Panc1 (cell line): ENCODE measurements at regions of chr6 and their contacts with region 1.

Region 1: DNA sequence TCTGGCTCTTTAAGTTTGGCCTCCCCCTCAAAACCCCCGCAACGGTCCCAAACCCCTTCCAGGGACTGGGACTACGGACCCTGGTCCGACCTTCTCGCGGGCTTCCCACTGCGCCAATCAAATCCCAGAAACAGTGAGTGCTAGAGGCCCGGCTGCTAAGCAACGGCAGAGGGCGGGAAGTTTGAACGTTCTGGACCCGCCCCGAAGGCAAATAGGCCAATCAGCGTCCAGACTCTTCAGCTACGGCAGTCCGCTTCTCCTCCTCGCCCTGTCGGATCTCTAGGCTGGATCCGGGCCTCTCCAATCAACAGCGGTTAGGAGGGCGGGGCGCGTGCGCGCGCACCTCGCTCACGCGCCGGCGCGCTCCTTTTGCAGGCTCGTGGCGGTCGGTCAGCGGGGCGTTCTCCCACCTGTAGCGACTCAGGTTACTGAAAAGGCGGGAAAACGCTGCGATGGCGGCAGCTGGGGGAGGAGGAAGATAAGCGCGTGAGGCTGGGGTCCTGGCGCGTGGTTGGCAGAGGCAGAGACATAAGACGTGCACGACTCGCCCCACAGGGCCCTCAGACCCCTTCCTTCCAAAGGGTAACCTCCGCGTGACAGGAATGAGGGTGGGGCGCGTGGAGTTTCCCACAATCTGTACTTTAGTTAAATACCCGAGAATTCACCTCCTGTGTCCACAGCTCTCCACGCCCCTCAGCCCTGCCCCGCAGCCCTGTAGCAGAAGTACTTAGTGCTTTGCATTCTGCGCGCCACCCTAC is at the start of gene MSH5:
- DNase-seq: peak; percentile 96
- ATAC-seq: peak; percentile 87
- H3K4me3 ChIP-seq: peak within 1 kb of the TSS; percentile 79 to 90
- H3K27ac ChIP-seq: peak within 1 kb of the TSS; percentile 100
- H3K4me1 ChIP-seq: peaks cover 32% of the 10 kb centered on the region
- H3K27me3 ChIP-seq: no peaks in the 10 kb centered on the region
- CTCF ChIP-seq: no peak
- total RNA-seq, gene MSH5: 38.1 TPM

Region 2: DNA sequence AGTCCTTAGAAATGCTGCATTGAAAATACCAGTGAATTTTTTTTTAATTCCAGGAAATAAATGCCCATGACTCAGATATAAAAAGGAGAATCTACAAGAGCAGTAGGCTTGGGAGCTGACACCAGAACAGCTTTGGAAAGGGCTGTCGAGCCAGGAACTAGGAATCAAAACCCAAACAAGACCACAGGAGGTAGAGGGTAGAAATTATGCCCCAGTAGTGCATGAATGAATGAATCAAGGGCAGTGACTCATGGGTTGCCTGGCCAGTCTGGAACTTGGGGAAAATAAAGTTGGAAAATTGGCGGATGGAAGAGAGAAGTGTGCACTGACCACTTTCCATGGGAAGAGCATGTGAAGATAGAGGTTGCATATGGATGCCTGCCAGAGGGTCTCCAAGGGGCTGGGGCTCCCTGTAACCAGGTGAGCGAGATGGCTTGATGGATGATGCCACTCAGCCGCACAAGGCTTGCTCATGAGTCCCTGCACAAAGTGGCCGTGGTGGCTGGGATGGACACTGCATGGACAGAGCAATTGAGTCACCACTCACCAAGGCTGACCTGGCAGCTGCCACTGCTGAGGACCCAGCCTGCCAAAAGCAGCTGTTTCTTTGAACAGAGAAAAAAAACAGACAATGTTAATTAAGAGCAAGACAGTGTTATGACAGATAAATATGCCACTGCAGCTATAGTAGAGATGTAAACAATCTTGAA is 226.2 kb before region 1 on chr6:
- CTCF ChIA-PET with region 1: no interaction called
- POLR2A ChIA-PET with region 1: no interaction called
- in situ Hi-C with region 1: no loop called
- intact Hi-C with region 1: no loop called
- DNase-seq: no peak
- ATAC-seq: no peak
- H3K4me3 ChIP-seq: no peak overlapping the region
- H3K27ac ChIP-seq: no peak overlapping the region
- H3K4me1 ChIP-seq: peaks cover 6% of the 10 kb centered on the region
- H3K27me3 ChIP-seq: no peaks in the 10 kb centered on the region
- CTCF ChIP-seq: no peak

Region 3: GRCh38 chr6:31665501-31666336 is 74.1 kb before region 1 on chr6 and contains the start of gene CSNK2B:
- CTCF ChIA-PET with region 1: no interaction called
- POLR2A ChIA-PET with region 1: interaction called, 11 read pairs
- in situ Hi-C with region 1: no loop called
- intact Hi-C with region 1: no loop called
- DNase-seq: peak; percentile 88
- ATAC-seq: peak; percentile 91
- H3K4me3 ChIP-seq: peak within 1 kb of the TSS; percentile 76 to 94
- H3K27ac ChIP-seq: peak within 1 kb of the TSS; percentile 96
- H3K4me1 ChIP-seq: peaks cover 14% of the 10 kb centered on the region
- H3K27me3 ChIP-seq: no peaks in the 10 kb centered on the region
- CTCF ChIP-seq: no peak
- total RNA-seq, gene CSNK2B: 219 TPM

Region 4: DNA sequence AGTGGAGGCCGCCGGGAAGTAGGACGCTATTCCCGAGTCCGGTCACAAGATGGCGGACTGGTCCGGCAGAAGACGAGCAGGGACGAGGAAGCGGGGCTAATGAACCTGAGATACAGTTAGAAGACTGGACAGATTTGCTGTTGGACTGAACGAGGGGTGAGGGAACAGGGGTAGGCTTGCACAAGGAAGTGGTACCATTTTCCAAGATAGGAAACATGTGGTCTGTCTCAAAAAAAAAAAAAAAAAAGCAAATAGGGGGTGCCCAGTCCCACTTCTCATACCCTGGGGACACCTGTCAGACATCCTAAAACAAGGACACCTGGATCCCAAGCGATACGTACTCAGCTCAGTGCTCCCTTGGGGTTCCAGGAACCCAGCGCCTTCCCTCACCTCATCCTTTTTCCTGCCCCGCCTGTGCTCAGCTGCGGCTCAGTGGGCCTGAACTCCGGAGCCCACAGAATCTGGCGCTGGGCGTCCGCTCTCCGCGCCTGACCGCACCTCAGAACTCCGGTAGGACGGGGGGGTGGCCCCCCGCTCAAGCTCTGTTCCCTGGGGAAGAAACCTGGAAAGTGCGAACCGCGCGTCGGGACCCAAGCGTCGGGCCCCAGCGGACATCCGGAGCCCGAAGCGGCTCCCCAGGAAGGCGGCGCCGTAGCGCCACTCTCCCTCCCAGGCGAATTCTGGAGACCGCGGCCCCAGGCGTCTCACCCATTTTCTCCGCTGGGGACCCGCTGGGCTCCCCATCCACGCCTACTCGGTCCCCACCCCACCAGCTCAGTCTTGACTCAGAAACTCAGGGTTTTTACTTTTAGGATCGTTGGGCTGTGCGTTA is 58.8 kb before region 1 on chr6 and contains the start of gene LY6G5C:
- CTCF ChIA-PET with region 1: no interaction called
- POLR2A ChIA-PET with region 1: interaction called, 11 read pairs
- in situ Hi-C with region 1: no loop called
- intact Hi-C with region 1: no loop called
- DNase-seq: peak; percentile 30
- ATAC-seq: peak; percentile 92
- H3K4me3 ChIP-seq: no peak within 1 kb of the TSS; a peak in 1 of 4 replicates
- H3K27ac ChIP-seq: no peak within 1 kb of the TSS; the same call in 1 of the 2 replicates
- H3K4me1 ChIP-seq: peaks cover 4% of the 10 kb centered on the region; the same call in 1 of the 2 replicates
- H3K27me3 ChIP-seq: no peaks in the 10 kb centered on the region
- CTCF ChIP-seq: peak; percentile 86
- total RNA-seq, gene LY6G5C: 0.62 TPM

Region 5: DNA sequence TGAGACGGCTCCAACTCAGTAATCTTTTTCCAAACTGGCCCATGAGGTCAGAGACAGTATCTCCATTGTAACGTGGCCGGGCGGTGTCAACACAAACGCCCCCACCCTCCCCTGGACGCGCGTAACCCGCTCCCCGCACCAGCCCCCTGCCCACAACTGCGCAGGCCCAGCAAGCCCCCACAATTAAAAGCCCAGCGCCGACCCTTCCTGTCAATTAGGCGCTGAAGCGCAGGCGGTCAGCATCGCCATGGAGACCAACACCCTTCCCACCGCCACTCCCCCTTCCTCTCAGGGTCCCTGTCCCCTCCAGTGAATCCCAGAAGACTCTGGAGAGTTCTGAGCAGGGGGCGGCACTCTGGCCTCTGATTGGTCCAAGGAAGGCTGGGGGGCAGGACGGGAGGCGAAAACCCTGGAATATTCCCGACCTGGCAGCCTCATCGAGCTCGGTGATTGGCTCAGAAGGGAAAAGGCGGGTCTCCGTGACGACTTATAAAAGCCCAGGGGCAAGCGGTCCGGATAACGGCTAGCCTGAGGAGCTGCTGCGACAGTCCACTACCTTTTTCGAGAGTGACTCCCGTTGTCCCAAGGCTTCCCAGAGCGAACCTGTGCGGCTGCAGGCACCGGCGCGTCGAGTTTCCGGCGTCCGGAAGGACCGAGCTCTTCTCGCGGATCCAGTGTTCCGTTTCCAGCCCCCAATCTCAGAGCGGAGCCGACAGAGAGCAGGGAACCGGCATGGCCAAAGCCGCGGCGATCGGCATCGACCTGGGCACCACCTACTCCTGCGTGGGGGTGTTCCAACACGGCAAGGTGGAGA is 75.4 kb after region 1 on chr6 and contains the starts of genes HSPA1A and HSPA1L:
- CTCF ChIA-PET with region 1: no interaction called
- POLR2A ChIA-PET with region 1: interaction called, 10 read pairs
- in situ Hi-C with region 1: no loop called
- intact Hi-C with region 1: no loop called
- DNase-seq: peak; percentile 96
- ATAC-seq: peak; percentile 86
- H3K4me3 ChIP-seq: peak within 1 kb of the TSS; percentile 56 to 70
- H3K27ac ChIP-seq: peak within 1 kb of the TSS; percentile 87
- H3K4me1 ChIP-seq: peaks cover 13% of the 10 kb centered on the region
- H3K27me3 ChIP-seq: no peaks in the 10 kb centered on the region
- CTCF ChIP-seq: no peak
- total RNA-seq, gene HSPA1A: 169 TPM
- total RNA-seq, gene HSPA1L: 2.8 TPM

Region 6: GRCh38 chr6:31834434-31835198 is 94.8 kb after region 1 on chr6:
- CTCF ChIA-PET with region 1: interaction called, 3 read pairs
- POLR2A ChIA-PET with region 1: interaction called, 9 read pairs
- in situ Hi-C with region 1: no loop called
- intact Hi-C with region 1: loop called (anchors 10 kb)
- DNase-seq: no peak
- ATAC-seq: peak; percentile 89
- H3K4me3 ChIP-seq: peak overlapping the region; percentile 77 to 95
- H3K27ac ChIP-seq: peak overlapping the region; percentile 95
- H3K4me1 ChIP-seq: peaks cover 30% of the 10 kb centered on the region
- H3K27me3 ChIP-seq: no peaks in the 10 kb centered on the region
- CTCF ChIP-seq: no peak

Region 7: GRCh38 chr6:31897612-31898382 is 158.0 kb after region 1 on chr6 and contains the start of gene EHMT2:
- CTCF ChIA-PET with region 1: no interaction called
- POLR2A ChIA-PET with region 1: interaction called, 11 read pairs
- in situ Hi-C with region 1: no loop called
- intact Hi-C with region 1: no loop called
- DNase-seq: peak; percentile 38
- ATAC-seq: peak; percentile 71
- H3K4me3 ChIP-seq: peak within 1 kb of the TSS; percentile 73 to 96
- H3K27ac ChIP-seq: peak within 1 kb of the TSS; percentile 91
- H3K4me1 ChIP-seq: peaks cover 21% of the 10 kb centered on the region
- H3K27me3 ChIP-seq: no peaks in the 10 kb centered on the region
- CTCF ChIP-seq: no peak
- total RNA-seq, gene EHMT2: 60.4 TPM

Region 8: DNA sequence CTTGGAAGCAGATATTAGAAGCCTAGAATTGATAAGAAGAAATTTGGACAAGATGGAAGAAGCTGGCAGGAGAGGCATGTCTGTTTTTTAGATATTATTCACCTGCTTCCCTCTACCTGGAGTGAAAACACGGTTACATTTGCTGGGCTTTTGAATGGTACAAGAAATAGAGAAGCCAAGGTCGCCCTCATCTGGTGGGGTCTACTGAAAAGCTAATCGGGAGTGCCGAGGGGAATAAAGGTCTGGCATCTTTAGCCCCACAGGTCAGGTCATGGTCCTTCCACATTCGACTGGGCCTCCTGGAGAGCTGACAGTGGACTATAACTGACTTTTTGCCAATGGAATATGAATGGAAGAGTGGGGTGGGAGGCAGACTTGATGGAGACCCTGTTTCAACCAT is 183.1 kb after region 1 on chr6:
- CTCF ChIA-PET with region 1: no interaction called
- POLR2A ChIA-PET with region 1: no interaction called
- in situ Hi-C with region 1: no loop called
- intact Hi-C with region 1: no loop called
- DNase-seq: no peak
- ATAC-seq: peak; percentile 64
- H3K4me3 ChIP-seq: no peak overlapping the region
- H3K27ac ChIP-seq: no peak overlapping the region
- H3K4me1 ChIP-seq: no peaks in the 10 kb centered on the region
- H3K27me3 ChIP-seq: no peaks in the 10 kb centered on the region
- CTCF ChIP-seq: no peak; the same call in 1 of the 2 replicates